MCF 10A (cell line): ENCODE measurements at regions of chr16 and their contacts with region 1.

Region 1: DNA sequence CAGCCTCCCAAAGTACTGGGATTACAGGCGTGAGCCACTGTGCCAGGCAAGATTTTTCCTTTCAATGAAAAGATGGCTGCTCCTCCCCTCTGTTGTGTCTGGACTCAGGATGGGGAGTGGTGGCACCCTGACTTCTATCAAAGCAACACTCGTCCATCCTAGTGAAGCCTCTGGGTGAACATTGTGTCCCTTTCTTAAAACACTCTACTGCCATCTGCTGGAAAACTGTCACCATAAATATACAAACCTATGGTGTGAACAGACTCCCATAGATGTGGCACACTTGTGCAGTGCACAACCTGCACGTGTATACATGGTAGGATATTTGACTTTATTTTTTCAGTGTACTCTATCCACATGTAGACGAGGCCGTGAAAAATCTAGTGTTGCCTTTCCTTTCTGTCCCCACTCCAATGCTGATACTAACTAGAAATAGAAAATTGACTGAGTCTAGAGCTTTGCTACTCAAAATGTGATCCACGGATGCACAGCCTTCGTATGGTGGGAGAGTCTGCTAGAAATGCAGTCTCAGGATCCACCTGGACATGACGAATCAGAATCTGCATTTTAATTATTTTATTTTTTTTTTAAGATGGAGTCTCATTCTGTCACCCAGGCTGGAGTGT is 55.9 kb upstream of the PLCG2 start:
- DNase-seq: peak; percentile 86
- H3K4me3 Mint-ChIP-seq: no peak overlapping the region
- H3K27ac Mint-ChIP-seq: no peak overlapping the region
- H3K4me1 Mint-ChIP-seq: peaks cover 15% of the 10 kb centered on the region
- H3K27me3 Mint-ChIP-seq: no peaks in the 10 kb centered on the region
- CTCF ChIP-seq: peak; percentile 68

Region 2: DNA sequence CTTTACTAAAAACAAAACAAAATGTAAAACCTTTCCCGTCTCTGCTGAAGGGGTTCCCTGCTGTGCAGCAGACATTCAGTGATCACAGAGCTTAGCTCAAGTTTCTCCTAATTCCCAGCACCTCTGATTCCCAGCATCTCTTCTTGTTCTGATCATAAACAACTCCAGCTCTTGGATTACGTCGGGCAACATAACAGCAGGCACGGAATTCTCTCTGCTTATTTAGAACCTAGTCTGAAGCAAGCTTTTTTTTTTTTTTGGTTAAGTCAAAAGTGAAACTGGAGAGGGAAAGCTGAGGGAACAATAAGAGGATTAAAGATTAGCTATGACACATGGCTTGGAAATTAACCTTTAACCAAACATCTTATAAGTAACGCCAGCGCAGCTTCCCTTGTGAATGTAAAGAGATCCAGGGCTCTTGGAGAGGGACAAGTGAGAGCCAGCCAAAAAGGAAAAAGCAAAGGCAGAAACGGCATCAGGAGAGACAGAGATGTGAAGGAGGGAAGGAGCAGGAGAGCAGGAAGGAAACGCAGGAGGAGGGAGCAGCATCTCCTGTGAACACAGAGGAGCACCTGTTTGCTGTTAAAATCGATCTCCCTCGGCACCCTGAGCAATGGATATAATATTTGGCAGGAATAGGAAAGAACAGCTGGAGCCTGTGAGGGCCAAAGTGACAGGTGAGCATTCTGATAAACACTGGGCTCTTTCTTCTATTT is 484.8 kb before region 1 on chr16 and contains the start of gene BCO1:
- CTCF ChIA-PET with region 1: interaction called, 12 read pairs
- POLR2A ChIA-PET with region 1: no interaction called
- intact Hi-C with region 1: no loop called
- DNase-seq: peak; percentile 25
- H3K4me3 Mint-ChIP-seq: peak within 1 kb of the TSS; percentile 67
- H3K27ac Mint-ChIP-seq: peak within 1 kb of the TSS; percentile 86
- H3K4me1 Mint-ChIP-seq: peaks cover 14% of the 10 kb centered on the region
- H3K27me3 Mint-ChIP-seq: no peaks in the 10 kb centered on the region
- CTCF ChIP-seq: no peak
- total RNA-seq, gene BCO1: not detected in 2 replicates

Region 3: DNA sequence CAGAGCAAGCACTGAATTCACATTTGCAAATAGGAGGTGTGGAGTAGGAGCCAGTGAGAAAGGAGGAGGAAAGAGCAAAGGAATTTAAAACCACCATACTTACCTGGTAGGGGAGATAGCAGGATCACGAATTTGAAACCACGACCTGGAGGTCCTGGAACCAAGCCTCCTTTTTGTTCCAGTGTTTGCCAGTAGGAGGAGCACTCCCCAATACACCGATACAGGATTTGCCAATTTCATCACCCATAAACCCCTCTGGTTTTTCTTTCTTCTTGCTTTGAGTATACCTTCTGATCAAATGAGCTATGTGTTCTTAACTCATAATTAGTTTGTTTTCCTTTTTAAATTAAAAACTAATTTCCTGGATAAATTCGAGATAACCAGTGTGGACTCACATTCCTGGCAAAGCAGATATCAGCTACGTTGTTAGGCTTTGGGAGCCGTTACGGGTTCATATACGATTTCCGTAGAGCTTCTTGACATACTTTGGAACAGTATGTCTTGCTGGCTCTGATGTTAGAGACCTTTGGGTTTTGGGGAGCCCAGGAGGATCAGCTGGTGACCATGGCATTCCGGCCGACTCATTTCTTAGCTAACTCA is 462.1 kb before region 1 on chr16:
- CTCF ChIA-PET with region 1: no interaction called
- POLR2A ChIA-PET with region 1: no interaction called
- intact Hi-C with region 1: loop called (anchors 5 kb)
- DNase-seq: peak; percentile 34
- H3K4me3 Mint-ChIP-seq: no peak overlapping the region
- H3K27ac Mint-ChIP-seq: no peak overlapping the region
- H3K4me1 Mint-ChIP-seq: peaks cover 13% of the 10 kb centered on the region
- H3K27me3 Mint-ChIP-seq: no peaks in the 10 kb centered on the region
- CTCF ChIP-seq: peak; percentile 61

Region 4: GRCh38 chr16:81623363-81624102 is 99.7 kb before region 1 on chr16:
- CTCF ChIA-PET with region 1: interaction called, 10 read pairs
- POLR2A ChIA-PET with region 1: no interaction called
- intact Hi-C with region 1: loop called (anchors 1 kb)
- DNase-seq: peak; percentile 73
- H3K4me3 Mint-ChIP-seq: no peak overlapping the region
- H3K27ac Mint-ChIP-seq: no peak overlapping the region
- H3K4me1 Mint-ChIP-seq: peaks cover 9% of the 10 kb centered on the region
- H3K27me3 Mint-ChIP-seq: no peaks in the 10 kb centered on the region
- CTCF ChIP-seq: peak; percentile 64